ENCODE measurements at regions of chr7 and their contacts with region 1.

Region 1: DNA sequence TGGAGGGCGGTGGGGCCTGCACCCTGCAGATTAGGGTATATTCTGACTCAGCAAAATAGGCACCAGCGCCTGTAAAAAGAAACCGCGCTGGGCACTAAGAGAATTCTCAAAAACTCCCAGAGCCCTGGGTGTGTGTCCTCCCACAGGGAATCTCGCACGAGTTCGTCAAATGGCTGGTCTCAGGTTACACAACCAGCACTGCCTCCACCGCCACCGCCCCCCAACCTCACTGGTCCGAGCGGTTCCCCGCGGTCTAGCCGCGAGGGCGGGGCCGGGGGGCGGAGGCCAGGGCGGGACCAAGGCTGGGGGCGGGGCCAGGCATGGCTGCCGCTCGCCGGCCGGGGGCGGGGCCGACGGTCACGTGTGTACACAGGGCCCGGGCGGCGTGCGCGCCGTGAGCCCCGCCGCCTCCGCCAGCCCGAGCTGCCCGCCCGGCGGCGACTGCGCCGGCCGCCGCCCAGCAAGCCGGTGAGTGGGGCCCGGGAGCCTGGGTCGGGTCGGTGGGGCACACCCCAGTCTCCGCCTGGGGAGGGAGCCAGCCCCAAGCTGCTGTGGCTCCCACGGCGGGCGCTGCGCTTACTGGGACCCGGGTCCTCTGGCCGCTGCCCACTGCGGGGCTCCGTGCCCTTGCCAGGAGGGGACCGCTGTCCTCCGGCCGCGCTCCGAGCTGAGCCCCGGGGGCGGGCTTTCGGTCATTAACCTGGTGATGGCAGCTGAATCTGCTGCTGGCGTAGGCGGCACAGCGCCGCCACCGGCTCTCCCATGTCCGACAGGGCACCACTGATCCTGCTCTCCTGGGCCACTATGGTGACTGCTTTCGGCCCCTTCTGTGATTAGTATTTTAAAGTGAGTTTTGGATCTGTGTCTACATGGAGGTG is at the start of gene GPR146:
- DNase-seq: peak; percentile 96
- ATAC-seq: peak; percentile 97
- H3K4me3 Mint-ChIP-seq: peak within 1 kb of the TSS; percentile 85
- H3K27ac Mint-ChIP-seq: peak within 1 kb of the TSS; percentile 50
- H3K4me1 Mint-ChIP-seq: peaks cover 24% of the 10 kb centered on the region
- H3K27me3 Mint-ChIP-seq: peaks cover 4% of the 10 kb centered on the region
- CTCF ChIP-seq: no peak
- total RNA-seq, gene GPR146: 6.2 and 6.9 TPM in 2 replicates

Region 2: DNA sequence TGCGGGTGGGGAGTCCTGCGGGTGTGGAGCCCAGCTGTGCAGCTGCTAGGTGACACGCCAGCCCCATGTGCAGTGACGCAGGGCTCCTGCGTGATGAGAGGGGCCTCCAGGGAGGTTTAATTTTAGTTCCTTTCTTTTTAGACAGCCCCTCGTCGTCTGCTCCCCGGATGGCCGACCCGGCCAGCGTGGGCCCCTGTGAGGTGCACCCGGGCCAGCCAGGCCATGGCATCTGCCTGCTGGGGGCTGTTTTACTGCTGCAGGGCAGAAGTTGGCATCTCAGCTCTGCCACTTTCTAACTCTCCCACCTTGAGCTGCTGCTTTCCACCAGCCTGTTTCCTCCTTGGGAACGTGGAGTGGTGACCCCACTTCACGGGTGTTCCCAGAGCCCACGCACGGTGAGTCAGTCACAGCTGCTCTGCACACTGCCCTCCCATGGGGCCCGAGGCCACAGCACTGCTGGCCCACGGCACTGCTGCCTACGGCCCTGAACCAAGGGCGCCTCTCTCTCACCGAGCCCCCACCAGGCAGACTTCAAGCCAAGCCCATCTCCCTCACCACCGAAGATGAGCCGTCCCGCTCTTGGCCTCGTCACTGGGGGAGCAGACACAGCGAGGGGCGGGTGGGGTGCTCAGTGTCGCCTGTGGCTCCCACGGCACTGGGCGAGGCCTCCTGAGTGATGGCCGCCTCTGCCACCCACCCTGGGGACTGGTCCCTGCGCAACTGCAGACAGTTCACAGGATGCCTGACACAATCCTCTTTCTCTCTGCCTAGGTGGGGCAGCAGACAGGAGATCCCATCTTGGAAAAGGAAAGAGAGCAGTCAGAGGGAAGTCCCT is 40.2 kb before region 1 on chr7:
- CTCF ChIA-PET with region 1: interaction called, 3 read pairs
- POLR2A ChIA-PET with region 1: interaction called, 4 read pairs
- intact Hi-C with region 1: loop called (anchors 5 kb)
- DNase-seq: peak; percentile 70
- ATAC-seq: peak; percentile 81
- H3K4me3 Mint-ChIP-seq: peak overlapping the region; percentile 64
- H3K27ac Mint-ChIP-seq: peak overlapping the region; percentile 70
- H3K4me1 Mint-ChIP-seq: peaks cover 38% of the 10 kb centered on the region
- H3K27me3 Mint-ChIP-seq: no peaks in the 10 kb centered on the region
- CTCF ChIP-seq: no peak

Region 3: GRCh38 chr7:1020849-1021251 is 23.6 kb before region 1 on chr7:
- CTCF ChIA-PET with region 1: interaction called, 6 read pairs
- POLR2A ChIA-PET with region 1: interaction called, 12 read pairs
- intact Hi-C with region 1: loop called (anchors 2 kb)
- DNase-seq: no peak
- ATAC-seq: no peak
- H3K4me3 Mint-ChIP-seq: no peak overlapping the region
- H3K27ac Mint-ChIP-seq: no peak overlapping the region
- H3K4me1 Mint-ChIP-seq: peaks cover 56% of the 10 kb centered on the region
- H3K27me3 Mint-ChIP-seq: no peaks in the 10 kb centered on the region
- CTCF ChIP-seq: no peak

Region 4: GRCh38 chr7:1028031-1028770 is 16.2 kb before region 1 on chr7:
- CTCF ChIA-PET with region 1: interaction called, 5 read pairs
- POLR2A ChIA-PET with region 1: interaction called, 12 read pairs
- intact Hi-C with region 1: loop called (anchors 2 kb)
- DNase-seq: peak; percentile 85
- ATAC-seq: peak; percentile 38
- H3K4me3 Mint-ChIP-seq: peak overlapping the region; percentile 91
- H3K27ac Mint-ChIP-seq: no peak overlapping the region
- H3K4me1 Mint-ChIP-seq: peaks cover 61% of the 10 kb centered on the region
- H3K27me3 Mint-ChIP-seq: no peaks in the 10 kb centered on the region
- CTCF ChIP-seq: no peak

Region 5: DNA sequence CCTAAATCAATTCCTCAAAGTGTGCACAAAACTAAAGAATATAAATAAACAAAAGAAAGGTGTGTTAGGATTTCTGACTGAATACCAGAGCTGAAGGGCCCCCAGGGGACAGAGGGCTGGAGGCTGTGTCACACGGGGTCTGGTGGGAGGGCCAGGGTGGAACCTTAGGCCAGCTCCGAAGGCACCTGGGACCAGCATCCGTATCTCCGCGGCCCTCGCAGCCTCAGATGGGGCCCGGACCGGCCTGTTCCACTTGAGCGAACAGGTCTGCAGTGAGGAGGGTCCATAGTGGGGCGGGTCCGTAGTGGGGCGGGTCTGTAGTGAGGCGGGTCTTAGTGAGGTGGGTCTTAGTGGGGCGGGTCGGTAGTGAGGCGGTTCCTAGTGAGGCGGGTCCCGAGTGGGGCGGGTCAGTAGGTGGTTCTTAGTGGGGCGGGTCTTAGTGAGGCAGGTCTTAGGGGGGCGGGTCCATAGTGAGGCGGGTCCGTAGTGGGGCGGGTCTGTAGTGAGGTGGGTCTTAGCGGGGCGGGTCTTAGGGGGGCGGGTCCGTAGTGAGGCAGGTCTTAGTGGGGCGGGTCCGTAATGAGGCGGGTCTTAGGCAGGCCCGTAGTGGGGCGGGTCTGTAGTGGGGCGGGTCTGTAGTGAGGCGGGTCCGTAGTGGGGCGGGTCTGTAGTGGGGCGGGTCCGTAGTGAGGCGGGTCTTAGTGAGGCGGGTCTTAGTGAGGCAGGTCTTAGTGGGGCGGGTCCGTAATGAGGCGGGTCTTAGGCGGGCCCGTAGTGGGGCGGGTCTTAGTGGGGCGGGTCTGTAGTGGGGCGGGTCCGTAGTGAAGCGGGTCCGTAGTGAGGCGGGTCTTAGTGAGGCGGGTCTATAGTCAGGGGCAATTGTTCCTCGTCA is 15.0 kb after region 1 on chr7:
- CTCF ChIA-PET with region 1: interaction called, 12 read pairs
- POLR2A ChIA-PET with region 1: interaction called, 18 read pairs
- intact Hi-C with region 1: loop called (anchors 1 kb)
- DNase-seq: no peak
- ATAC-seq: peak; percentile 15
- H3K4me3 Mint-ChIP-seq: peak overlapping the region; percentile 32
- H3K27ac Mint-ChIP-seq: no peak overlapping the region
- H3K4me1 Mint-ChIP-seq: peaks cover 65% of the 10 kb centered on the region
- H3K27me3 Mint-ChIP-seq: peaks cover 8% of the 10 kb centered on the region
- CTCF ChIP-seq: no peak